ENCODE measurements at regions of chr14 and their contacts with region 1.

Region 1: GRCh38 chr14:70020352-70021170 is 141.3 kb downstream of the SMOC1 start:
- DNase-seq: no peak
- ATAC-seq: no peak
- H3K4me3 ChIP-seq: no peak overlapping the region
- H3K27ac ChIP-seq: no peak overlapping the region
- H3K4me1 ChIP-seq: no peaks in the 10 kb centered on the region
- H3K27me3 ChIP-seq: no peaks in the 10 kb centered on the region
- CTCF ChIP-seq: no peak
- POLR2A ChIP-seq: no peak

Region 2: GRCh38 chr14:69637503-69638030 is 383.0 kb before region 1 on chr14:
- intact Hi-C with region 1: no loop called
- DNase-seq: peak in 2 of 4 donors; percentile 37 to 38
- ATAC-seq: peak; percentile 29
- H3K4me3 ChIP-seq: no peak overlapping the region
- H3K27ac ChIP-seq: peak overlapping the region in 1 of 4 donors; percentile 23
- H3K4me1 ChIP-seq: peaks cover 68% of the 10 kb centered on the region
- H3K27me3 ChIP-seq: no peaks in the 10 kb centered on the region
- CTCF ChIP-seq: no peak
- POLR2A ChIP-seq: no peak

Region 3: GRCh38 chr14:69818757-69819191 is 201.8 kb before region 1 on chr14:
- intact Hi-C with region 1: loop called (anchors 5 kb)
- DNase-seq: peak; percentile 39 to 64 (median 52)
- ATAC-seq: peak; percentile 79
- H3K4me3 ChIP-seq: no peak overlapping the region
- H3K27ac ChIP-seq: no peak overlapping the region
- H3K4me1 ChIP-seq: no peaks in the 10 kb centered on the region
- H3K27me3 ChIP-seq: no peaks in the 10 kb centered on the region
- CTCF ChIP-seq: peak; percentile 77 to 91 (median 83)
- POLR2A ChIP-seq: no peak

Region 4: DNA sequence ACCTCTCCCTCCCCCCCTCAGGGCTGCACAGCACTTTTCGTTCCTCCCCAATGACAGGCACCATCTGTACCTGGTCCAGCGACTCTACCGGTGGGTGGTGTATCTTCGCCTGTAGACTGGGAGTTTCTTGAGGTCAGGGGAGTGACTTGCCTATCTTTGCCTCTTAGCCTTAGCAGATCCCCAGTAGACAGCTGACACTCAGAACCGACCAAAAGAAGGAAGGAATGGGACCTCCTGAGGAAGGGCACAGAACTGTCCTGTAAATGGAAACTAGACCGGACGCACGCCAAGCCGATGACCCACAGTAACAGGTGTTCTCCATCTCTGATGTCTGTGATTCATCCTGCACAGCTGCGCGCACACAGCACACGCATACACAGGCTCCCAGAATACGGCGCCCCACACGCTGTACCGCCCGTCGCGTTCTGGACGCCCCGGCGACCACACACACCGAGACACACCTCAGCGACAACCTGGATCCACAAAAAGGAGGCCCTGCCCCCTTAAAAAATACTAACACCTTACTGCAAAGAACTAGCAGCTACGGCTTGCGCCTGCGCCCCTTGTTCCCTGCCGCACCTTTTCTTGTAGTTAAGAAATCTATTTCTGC is 620.5 kb after region 1 on chr14:
- intact Hi-C with region 1: no loop called
- DNase-seq: peak; percentile 26 to 57 (median 36)
- ATAC-seq: peak; percentile 62
- H3K4me3 ChIP-seq: peak overlapping the region; percentile 16 to 61
- H3K27ac ChIP-seq: peak overlapping the region in 1 of 4 donors; percentile 11
- H3K4me1 ChIP-seq: peaks cover 24% of the 10 kb centered on the region
- H3K27me3 ChIP-seq: no peaks in the 10 kb centered on the region
- CTCF ChIP-seq: no peak
- POLR2A ChIP-seq: peak in 2 of 3 donors; percentile 19 to 23

Measured in body of pancreas (tissue), 4 donors.